Activated CD8-positive, alpha-beta T cell treated with anti-CD3 and anti-CD28 coated beads, Interleukin-2, amount 10 ng/mL, durations not matched to agents 7 days and 5 days (primary cell): ENCODE measurements at regions of chr17 and their contacts with region 1.

Region 1: DNA sequence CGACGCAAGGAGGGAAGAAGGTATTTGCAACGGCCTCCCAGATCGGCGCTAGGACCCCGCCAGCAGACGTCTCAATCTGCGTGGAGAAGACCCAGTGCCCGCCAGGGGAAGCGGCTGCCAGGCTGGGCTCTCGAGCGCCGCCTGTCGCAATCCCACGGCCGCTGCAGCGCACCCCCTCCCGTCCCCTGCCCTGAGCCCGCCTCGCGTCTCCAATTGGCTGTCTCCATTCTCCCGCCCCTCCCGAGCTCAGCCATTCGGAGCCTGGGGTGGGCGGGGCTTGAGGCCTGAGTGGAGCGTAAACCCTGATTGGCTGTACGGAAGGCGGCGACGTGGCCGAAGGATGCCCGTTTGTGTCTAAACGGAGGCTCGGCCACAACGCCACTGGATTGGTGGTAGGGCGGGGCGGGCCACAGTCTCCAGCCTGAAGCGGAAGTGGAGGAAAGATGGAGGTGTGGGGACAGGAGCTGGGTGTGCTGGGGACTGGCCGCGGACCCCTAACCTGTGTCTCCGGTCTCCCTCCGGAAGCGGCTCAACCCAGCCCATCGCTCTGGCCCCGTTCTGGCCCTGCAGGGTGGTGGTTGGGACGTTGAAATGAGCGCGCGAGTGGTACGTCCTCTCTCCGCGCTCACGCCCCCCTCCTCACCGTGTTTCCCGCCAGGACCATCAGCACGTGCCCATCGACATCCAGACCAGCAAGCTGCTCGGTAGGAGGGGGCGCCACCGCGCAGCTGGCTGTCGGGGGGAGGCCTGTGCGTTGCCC is at the start of gene CDK5RAP3:
- DNase-seq: peak; percentile 100
- ATAC-seq: peak; percentile 99
- H3K4me3 Mint-ChIP-seq: peak within 1 kb of the TSS; percentile 92
- H3K27ac Mint-ChIP-seq: peak within 1 kb of the TSS; percentile 91
- H3K4me1 Mint-ChIP-seq: peaks cover 27% of the 10 kb centered on the region
- H3K27me3 Mint-ChIP-seq: no peaks in the 10 kb centered on the region
- total RNA-seq, gene CDK5RAP3: 186 to 196 TPM

Region 2: DNA sequence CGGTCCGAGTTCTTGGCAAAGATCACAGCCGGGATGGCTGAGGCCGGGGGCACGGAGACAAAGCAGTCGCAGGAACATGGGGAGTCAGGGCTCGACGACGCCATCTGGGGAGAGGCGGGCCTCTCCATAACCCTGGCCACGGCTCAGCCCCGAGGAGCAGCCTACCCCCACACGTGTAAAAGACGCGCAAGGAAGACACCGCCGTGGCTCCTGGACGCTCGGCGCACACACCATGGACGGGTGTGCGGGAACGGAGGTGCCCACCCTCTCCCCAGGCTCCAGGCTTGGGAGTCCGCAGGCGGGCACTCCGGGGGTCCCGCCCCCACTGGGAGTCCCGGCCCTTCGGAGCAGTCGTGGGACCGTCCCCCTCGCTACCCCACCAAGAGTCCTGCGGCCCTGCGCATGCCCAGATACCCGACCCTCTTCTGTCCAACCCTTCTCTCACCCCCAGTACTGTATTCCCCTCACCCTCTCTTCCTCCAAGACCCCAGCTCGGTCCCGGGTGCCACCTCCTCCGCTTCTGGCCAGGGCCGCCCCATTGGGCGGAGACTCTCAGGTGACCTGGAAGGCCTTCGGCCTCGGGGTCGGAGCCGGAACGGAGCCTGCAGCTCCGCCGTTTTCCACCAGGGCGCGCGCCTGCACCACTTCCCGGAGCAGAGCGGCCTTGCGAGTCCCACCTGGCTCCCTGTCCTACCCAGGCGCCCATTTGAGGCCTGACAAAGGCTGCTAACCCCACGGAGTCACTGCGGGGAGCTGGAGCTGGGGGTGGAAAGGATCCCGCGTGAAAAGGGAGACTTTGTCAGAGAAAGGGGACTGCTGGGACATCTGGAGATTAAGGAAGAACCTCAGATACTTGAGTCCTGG is 129.9 kb before region 1 on chr17 and contains the start of gene SCRN2:
- CTCF ChIA-PET with region 1: interaction called, 10 read pairs
- POLR2A ChIA-PET with region 1: interaction called, 3 read pairs
- DNase-seq: peak; percentile 91
- ATAC-seq: peak; percentile 92
- H3K4me3 Mint-ChIP-seq: peak within 1 kb of the TSS; percentile 99
- H3K27ac Mint-ChIP-seq: peak within 1 kb of the TSS; percentile 95
- H3K4me1 Mint-ChIP-seq: peaks cover 30% of the 10 kb centered on the region
- H3K27me3 Mint-ChIP-seq: peaks cover 16% of the 10 kb centered on the region
- total RNA-seq, gene SCRN2: 24.1 to 24.8 TPM

Region 3: DNA sequence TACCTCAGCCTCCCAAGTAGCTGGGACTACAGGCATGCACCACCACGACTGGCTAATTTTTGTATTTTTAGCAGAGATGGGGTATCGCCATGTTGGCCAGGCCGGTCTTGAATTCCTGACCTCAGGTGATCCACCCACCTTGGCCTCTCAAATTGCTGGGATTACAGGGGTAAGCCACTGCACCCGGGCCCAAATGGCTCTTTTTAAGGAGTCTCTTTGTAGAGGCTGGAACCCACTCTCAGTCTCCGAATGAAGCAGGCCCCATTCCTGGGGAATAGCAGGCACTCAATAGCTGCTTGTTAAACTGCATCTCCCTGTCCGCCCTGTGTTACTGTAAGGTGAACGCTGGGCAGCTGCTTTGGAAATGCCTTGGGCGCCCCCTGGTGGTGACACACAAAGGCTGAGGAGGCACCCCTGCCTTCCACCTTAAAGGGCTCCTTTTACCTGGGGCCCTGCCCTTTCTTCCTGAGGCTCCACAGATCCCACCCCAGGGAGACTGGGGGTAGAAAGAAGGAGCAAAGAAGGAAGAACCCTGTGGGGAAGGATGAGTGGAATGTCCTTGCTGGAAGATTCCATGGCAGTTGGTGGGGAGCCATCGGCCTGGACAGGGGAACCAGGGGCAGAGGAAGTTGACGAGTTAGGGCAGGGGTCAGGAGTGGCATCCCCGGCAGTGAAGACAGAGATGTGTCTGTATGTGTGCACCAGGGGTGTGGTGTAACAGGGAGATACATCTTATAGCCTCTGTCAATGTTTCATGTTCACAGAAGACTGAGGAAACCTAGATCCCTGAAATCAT is 81.0 kb before region 1 on chr17:
- CTCF ChIA-PET with region 1: interaction called, 14 read pairs
- POLR2A ChIA-PET with region 1: interaction called, 21 read pairs
- DNase-seq: peak; percentile 94
- ATAC-seq: peak; percentile 97
- H3K4me3 Mint-ChIP-seq: no peak overlapping the region
- H3K27ac Mint-ChIP-seq: peak overlapping the region; percentile 39
- H3K4me1 Mint-ChIP-seq: peaks cover 33% of the 10 kb centered on the region
- H3K27me3 Mint-ChIP-seq: no peaks in the 10 kb centered on the region

Region 4: DNA sequence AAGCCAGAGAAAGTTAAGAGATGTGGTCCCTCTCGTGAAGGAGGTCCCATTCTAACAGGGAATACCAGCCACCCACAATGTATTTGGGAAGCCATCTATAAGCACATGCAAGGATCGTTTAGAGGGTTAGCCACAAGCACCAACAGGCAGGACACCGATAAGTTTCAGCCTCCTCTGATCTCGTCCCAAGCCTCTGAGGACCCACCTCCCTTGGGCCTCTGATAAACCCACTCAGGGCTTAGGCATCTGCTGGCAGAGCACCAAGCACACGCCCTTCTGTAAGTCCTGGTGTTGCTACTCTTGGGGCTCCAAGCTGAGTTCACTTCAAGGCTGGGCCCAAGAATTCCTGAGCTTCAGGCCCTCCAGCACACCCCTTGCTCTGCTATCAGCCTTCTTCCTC is 34.9 kb before region 1 on chr17:
- CTCF ChIA-PET with region 1: interaction called, 328 read pairs
- POLR2A ChIA-PET with region 1: interaction called, 3 read pairs
- DNase-seq: no peak
- ATAC-seq: no peak
- H3K4me3 Mint-ChIP-seq: no peak overlapping the region
- H3K27ac Mint-ChIP-seq: no peak overlapping the region
- H3K4me1 Mint-ChIP-seq: peaks cover 6% of the 10 kb centered on the region
- H3K27me3 Mint-ChIP-seq: no peaks in the 10 kb centered on the region

Region 5: DNA sequence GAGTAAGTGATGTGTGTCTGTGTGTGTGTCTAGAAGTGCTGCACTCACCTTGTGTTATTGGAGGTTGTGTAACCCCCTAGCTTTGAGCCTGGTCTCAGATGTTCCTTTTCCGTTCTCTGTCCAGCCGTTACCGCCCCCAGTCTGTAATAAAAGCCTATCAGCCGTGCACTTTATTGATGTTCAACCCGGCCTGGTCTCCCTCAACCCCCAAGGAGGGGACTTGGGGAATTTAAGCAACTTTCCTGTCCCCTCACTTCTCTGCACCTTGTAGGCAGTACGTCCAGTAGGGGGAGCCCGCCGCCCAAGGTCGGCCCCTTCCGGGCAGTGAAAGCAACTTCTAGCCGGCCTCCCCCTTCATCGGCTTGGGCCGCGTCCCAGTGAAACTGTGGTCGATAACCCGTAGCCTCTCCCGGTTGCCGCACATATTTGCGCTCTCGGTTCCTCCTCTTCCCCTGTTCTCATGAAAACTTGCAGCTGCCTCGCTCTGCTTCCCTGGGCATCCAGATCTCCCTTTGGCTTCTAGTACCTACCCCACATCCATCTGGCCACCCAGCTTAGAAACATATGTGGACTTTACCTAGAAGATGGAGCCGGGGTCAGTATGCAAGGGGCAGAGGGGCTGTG is 21.6 kb before region 1 on chr17:
- CTCF ChIA-PET with region 1: interaction called, 328 read pairs
- POLR2A ChIA-PET with region 1: interaction called, 21 read pairs
- DNase-seq: peak; percentile 87
- ATAC-seq: peak; percentile 82
- H3K4me3 Mint-ChIP-seq: peak overlapping the region; percentile 54
- H3K27ac Mint-ChIP-seq: peak overlapping the region; percentile 77
- H3K4me1 Mint-ChIP-seq: peaks cover 50% of the 10 kb centered on the region
- H3K27me3 Mint-ChIP-seq: no peaks in the 10 kb centered on the region

Region 6: DNA sequence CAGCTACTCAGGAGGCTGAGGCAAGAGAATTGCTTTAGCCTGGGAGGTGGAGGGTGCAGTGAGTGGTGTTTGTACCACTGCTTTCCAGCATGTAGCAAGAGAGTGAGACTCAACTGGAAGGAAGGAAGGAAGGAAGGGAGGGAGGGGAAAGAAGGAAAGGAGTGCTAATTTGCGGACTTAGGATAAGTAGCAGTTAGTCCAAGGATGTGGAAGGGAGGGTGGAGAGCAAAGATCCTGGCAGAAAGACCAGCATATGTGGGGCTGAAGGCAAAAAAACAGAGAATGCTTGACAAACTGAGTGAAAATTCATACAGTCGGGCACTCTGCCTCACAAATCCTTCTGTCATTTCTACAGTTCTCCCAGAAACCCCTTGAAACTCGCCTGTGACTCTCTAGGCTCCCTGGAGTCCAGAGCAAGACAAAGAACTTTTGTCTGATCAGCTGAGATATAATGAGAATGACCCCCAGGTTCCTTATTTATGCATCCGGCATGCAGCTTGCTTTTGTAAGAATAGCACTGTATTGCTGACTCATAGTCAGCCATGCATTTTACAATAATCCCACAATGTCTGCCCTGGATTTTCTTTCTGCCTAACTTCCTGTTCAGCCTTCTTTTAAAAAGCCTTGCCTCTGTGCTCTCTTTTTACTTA is 31.5 kb after region 1 on chr17:
- CTCF ChIA-PET with region 1: interaction called, 20 read pairs
- POLR2A ChIA-PET with region 1: no interaction called
- DNase-seq: no peak
- ATAC-seq: no peak
- H3K4me3 Mint-ChIP-seq: no peak overlapping the region
- H3K27ac Mint-ChIP-seq: no peak overlapping the region
- H3K4me1 Mint-ChIP-seq: peaks cover 15% of the 10 kb centered on the region
- H3K27me3 Mint-ChIP-seq: peaks cover 35% of the 10 kb centered on the region